ENCODE measurements at regions of chr4 and their contacts with region 1.

Region 1: GRCh38 chr4:145180298-145181090 is at the start of gene OTUD4:
- DNase-seq: peak; percentile 96
- H3K4me3 Mint-ChIP-seq: peak within 1 kb of the TSS; percentile 93
- H3K27ac Mint-ChIP-seq: peak within 1 kb of the TSS; percentile 98
- H3K4me1 Mint-ChIP-seq: peaks cover 29% of the 10 kb centered on the region
- H3K27me3 Mint-ChIP-seq: no peaks in the 10 kb centered on the region
- total RNA-seq, gene OTUD4: 35.9 to 37.1 TPM

Region 2: GRCh38 chr4:145097821-145098674 is 82.4 kb before region 1 on chr4 and contains the starts of genes ABCE1 and ANAPC10:
- CTCF ChIA-PET with region 1: no interaction called
- intact Hi-C with region 1: loop called (anchors 1 kb)
- DNase-seq: peak; percentile 97
- H3K4me3 Mint-ChIP-seq: peak within 1 kb of the TSS; percentile 92
- H3K27ac Mint-ChIP-seq: peak within 1 kb of the TSS; percentile 97
- H3K4me1 Mint-ChIP-seq: peaks cover 23% of the 10 kb centered on the region
- H3K27me3 Mint-ChIP-seq: no peaks in the 10 kb centered on the region
- total RNA-seq, gene ABCE1: 164 to 174 TPM
- total RNA-seq, gene ANAPC10: 23.5 to 26.5 TPM

Region 3: GRCh38 chr4:145154573-145154972 is 25.9 kb before region 1 on chr4:
- CTCF ChIA-PET with region 1: interaction called, 3 read pairs
- intact Hi-C with region 1: loop called (anchors 1 kb)
- DNase-seq: no peak
- H3K4me3 Mint-ChIP-seq: no peak overlapping the region
- H3K27ac Mint-ChIP-seq: no peak overlapping the region
- H3K4me1 Mint-ChIP-seq: peaks cover 12% of the 10 kb centered on the region
- H3K27me3 Mint-ChIP-seq: no peaks in the 10 kb centered on the region

Region 4: GRCh38 chr4:145308598-145308997 is 128.1 kb after region 1 on chr4:
- CTCF ChIA-PET with region 1: no interaction called
- intact Hi-C with region 1: loop called (anchors 2 kb)
- DNase-seq: peak; percentile 26
- H3K4me3 Mint-ChIP-seq: no peak overlapping the region
- H3K27ac Mint-ChIP-seq: peak overlapping the region; percentile 72
- H3K4me1 Mint-ChIP-seq: peaks cover 34% of the 10 kb centered on the region
- H3K27me3 Mint-ChIP-seq: peaks cover 4% of the 10 kb centered on the region

Region 5: DNA sequence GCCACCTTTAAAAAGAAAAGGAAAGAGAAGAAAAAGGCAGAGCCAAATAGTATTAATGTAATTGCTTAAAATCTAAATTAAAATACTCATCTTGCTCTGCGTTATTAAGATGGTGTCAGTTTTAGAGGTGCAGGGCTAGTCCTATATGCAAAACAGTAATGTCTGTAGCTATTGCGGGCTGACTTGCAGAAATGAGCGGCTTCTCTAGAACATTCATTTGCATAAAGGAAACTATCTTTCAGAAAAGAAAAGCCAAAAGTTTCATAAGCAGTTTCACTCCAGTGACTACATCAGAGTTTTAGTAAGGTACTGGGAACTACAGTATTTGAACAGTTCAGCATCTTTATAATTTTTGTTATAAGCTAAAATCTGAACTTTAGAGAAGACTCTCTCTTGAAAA is 307.1 kb after region 1 on chr4:
- CTCF ChIA-PET with region 1: interaction called, 7 read pairs
- intact Hi-C with region 1: loop called (anchors 1 kb)
- DNase-seq: peak; percentile 55
- H3K4me3 Mint-ChIP-seq: no peak overlapping the region
- H3K27ac Mint-ChIP-seq: no peak overlapping the region
- H3K4me1 Mint-ChIP-seq: peaks cover 5% of the 10 kb centered on the region
- H3K27me3 Mint-ChIP-seq: peaks cover 14% of the 10 kb centered on the region

Region 6: GRCh38 chr4:145808021-145808650 is 627.6 kb after region 1 on chr4:
- CTCF ChIA-PET with region 1: no interaction called
- intact Hi-C with region 1: loop called (anchors 1 kb)
- DNase-seq: peak; percentile 74
- H3K4me3 Mint-ChIP-seq: peak overlapping the region; percentile 46
- H3K27ac Mint-ChIP-seq: peak overlapping the region; percentile 91
- H3K4me1 Mint-ChIP-seq: peaks cover 44% of the 10 kb centered on the region
- H3K27me3 Mint-ChIP-seq: no peaks in the 10 kb centered on the region

Region 7: DNA sequence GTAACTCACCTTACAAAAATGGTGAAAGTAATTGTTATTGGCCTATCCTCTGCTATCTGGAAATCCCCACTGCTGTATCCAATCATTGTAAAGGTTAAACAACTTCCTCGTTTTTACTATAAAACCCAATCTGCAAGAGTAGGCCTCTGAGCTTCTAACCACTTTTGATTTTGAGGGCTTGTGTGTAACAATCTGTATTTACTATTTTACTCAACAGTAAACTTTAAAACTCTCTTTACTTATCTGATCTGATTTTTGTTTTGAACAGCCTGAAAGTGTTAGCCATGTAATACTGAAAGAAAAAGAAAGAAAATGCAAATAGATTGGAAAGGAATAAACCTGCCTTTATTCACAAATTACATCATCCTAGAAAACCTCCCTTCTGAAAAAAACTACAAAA is 1278.1 kb after region 1 on chr4:
- CTCF ChIA-PET with region 1: no interaction called
- intact Hi-C with region 1: loop called (anchors 1 kb)
- DNase-seq: peak; percentile 15
- H3K4me3 Mint-ChIP-seq: peak overlapping the region; percentile 63
- H3K27ac Mint-ChIP-seq: peak overlapping the region; percentile 91
- H3K4me1 Mint-ChIP-seq: peaks cover 32% of the 10 kb centered on the region
- H3K27me3 Mint-ChIP-seq: no peaks in the 10 kb centered on the region

Measured in activated naive CD4-positive, alpha-beta T cell treated with anti-CD3 and anti-CD28 coated beads for 36 hours (primary cell).